Ovary (tissue), 10 donors: ENCODE measurements at regions of chr15 and their contacts with region 1.

Region 1: DNA sequence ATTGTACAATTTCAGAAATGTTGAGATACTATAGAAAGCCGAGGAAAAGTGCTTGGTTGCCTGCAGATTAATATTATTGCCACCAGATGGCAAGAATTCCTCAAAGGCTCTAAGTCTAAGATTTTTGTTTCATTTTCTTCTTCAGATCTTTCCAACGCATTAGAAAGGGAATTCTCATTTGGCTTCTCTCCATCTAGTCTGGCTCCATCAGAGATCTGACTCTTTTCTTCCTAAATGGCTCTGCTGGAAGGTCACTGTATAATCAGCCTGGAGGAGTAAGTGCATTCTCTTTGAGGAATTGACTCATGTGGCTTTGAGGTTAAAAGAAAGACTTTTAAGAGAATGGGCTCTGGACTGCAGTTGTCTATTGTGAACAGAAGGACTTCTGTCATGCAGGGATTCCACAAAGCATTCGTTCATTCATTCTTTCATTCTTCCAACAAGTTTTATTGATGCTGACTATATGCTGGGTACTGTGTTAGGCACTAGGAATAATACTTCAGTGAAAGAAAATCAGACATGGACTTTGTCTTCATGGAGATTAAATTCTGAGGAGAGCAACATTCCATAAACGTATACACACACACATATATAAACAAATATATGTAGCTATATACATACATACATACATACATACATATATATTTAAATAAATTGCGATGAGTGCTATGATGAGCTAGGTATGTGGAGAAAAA is 55.3 kb downstream of the SLC28A2 start:
- DNase-seq: no peak
- H3K4me3 ChIP-seq: no peak overlapping the region
- H3K27ac ChIP-seq: no peak overlapping the region
- H3K4me1 ChIP-seq: peaks cover 3% of the 10 kb centered on the region
- H3K27me3 ChIP-seq: no peaks in the 10 kb centered on the region
- CTCF ChIP-seq: peak; percentile 47 to 79 (median 50)
- EP300 ChIP-seq: no peak
- POLR2A ChIP-seq: no peak

Region 2: DNA sequence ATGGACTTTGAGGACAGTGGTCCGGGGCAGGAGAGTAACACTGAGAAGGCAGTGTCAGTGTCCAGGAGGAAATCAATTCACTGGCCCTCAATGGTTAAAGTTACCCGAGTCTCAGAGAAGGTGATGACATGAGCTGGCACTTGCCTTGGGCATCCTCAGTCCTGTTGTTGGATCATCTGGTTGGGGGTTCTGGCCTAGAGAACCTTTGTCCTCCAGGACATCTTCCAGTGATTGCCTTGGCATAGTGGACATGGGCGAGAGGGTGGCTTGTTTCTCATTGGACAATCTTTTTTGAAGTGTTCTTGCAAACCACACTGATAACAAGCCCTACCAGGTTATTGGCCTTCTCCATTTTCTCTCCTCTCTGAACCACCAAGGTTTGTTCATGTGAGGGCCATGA is 434.3 kb before region 1 on chr15:
- intact Hi-C with region 1: no loop called
- DNase-seq: no peak
- H3K4me3 ChIP-seq: no peak overlapping the region
- H3K27ac ChIP-seq: no peak overlapping the region
- H3K4me1 ChIP-seq: no peaks in the 10 kb centered on the region
- H3K27me3 ChIP-seq: no peaks in the 10 kb centered on the region
- CTCF ChIP-seq: no peak
- EP300 ChIP-seq: no peak
- POLR2A ChIP-seq: no peak

Region 3: DNA sequence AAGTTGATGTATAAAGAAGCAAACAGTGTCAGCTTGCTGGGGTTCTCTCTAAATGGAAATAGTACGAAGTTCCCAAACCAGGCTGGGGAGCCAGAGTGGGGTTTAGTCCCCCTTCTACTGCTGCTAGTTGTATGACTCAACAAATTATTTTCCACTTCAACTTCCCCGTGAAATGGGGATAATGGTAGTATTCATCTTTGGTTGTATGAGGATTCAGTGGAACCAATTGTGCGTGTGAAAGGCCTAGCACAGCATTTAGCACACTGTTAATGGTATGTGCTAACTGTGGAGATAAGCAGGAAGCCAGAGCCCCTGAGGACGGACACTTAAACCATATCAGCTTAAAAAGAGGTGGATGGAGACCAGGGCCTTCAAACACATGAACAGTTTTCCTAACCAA is 280.2 kb before region 1 on chr15:
- intact Hi-C with region 1: no loop called
- DNase-seq: no peak
- H3K4me3 ChIP-seq: no peak overlapping the region
- H3K27ac ChIP-seq: no peak overlapping the region
- H3K4me1 ChIP-seq: peaks cover 4% of the 10 kb centered on the region
- H3K27me3 ChIP-seq: no peaks in the 10 kb centered on the region
- CTCF ChIP-seq: no peak
- EP300 ChIP-seq: no peak
- POLR2A ChIP-seq: no peak

Region 4: DNA sequence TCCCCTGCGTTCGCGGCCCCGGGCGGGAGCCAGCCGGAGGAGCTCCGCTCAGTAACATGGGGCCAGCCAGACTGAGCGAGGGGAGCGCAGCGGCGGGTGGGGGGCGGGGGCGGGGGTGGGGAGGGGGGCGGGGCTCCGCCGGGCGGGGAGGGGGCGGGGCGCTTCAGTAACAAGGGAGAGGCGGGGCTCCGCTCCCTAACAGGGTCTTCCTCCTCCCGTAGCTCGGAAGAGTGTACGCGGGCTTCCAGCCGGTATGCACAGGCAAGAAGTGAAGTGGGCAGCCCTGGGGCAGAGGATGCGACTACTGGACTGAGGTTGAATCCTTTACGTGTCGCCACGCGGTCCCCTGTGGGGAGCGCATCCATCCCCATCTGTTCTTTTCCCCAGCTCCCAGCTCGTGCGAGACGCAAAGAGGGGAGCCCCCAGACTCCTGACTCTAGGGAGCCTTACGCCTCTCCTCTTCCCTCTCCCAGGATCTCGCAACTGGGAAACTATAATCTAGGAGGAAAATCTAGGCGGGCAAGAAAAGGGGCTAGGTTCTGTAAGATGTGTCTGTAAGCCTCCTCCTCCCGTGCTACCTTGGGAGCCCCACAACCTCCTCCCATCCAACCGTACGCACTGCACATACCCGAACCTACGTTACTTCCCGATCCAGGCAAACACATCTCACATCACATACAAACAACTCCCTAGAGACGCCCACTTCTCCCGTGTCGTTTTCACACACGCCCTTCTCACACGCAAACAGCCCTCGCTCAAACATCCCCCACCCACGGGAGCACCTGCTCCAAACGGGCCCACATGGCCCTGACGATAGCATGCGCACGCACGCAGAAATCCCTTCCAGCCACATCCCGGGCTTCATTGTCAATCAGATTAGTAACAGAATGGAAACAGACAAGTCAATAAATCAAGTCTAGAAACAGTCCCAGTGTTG is 119.2 kb before region 1 on chr15 and contains the start of gene SHF:
- intact Hi-C with region 1: loop called in 1 of 4 experiments (anchors 5 kb)
- DNase-seq: peak; percentile 83 to 87 (median 84)
- H3K4me3 ChIP-seq: peak within 1 kb of the TSS; percentile 94
- H3K27ac ChIP-seq: peak within 1 kb of the TSS; percentile 86 to 97
- H3K4me1 ChIP-seq: peaks cover 4% of the 10 kb centered on the region
- H3K27me3 ChIP-seq: no peaks in the 10 kb centered on the region
- CTCF ChIP-seq: no peak
- EP300 ChIP-seq: no peak
- POLR2A ChIP-seq: peak; percentile 48
- total RNA-seq, gene SHF: 18.3 to 45.3 (median 30.5) TPM

Region 5: GRCh38 chr15:45372041-45372995 is 64.9 kb after region 1 on chr15:
- intact Hi-C with region 1: no loop called
- DNase-seq: no peak
- H3K4me3 ChIP-seq: no peak overlapping the region
- H3K27ac ChIP-seq: no peak overlapping the region
- H3K4me1 ChIP-seq: peaks cover 13% of the 10 kb centered on the region
- H3K27me3 ChIP-seq: no peaks in the 10 kb centered on the region
- CTCF ChIP-seq: no peak
- EP300 ChIP-seq: no peak
- POLR2A ChIP-seq: no peak

Region 6: DNA sequence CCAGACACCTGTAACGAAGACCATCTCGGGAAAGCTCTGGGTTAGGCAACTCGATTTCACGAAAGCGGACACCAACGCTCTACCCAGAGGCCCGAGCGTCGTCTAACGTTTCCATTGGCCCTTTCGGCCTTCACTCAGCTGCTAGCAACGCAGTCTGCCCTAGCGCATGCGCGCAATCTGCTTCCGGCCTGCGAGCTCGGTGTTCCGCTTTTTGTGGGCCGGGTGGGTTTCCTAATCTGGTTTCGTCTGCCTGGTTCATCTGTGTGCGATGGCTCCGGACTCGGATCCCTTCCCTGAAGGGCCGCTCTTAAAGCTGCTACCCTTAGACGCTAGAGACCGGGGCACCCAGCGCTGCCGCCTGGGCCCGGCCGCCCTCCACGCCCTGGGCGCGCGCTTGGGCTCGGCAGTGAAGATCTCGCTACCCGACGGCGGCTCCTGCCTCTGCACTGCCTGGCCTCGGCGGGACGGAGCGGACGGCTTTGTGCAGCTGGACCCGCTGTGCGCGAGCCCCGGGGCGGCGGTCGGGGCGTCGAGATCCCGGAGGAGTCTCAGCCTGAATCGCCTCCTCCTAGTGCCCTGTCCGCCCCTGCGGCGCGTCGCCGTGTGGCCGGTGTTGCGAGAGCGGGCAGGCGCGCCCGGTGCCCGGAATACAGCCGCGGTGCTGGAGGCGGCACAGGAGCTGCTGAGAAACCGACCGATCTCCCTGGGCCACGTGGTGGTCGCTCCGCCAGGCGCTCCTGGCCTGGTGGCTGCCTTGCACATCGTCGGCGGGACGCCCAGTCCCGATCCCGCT is 95.0 kb after region 1 on chr15:
- intact Hi-C with region 1: loop called in 3 of 4 experiments (anchors 5 kb)
- DNase-seq: peak; percentile 94 to 98 (median 97)
- H3K4me3 ChIP-seq: peak overlapping the region; percentile 98
- H3K27ac ChIP-seq: peak overlapping the region; percentile 56 to 85
- H3K4me1 ChIP-seq: peaks cover 3% of the 10 kb centered on the region
- H3K27me3 ChIP-seq: no peaks in the 10 kb centered on the region
- CTCF ChIP-seq: no peak
- EP300 ChIP-seq: no peak
- POLR2A ChIP-seq: peak; percentile 65

Region 7: GRCh38 chr15:45759936-45760335 is 452.6 kb after region 1 on chr15:
- intact Hi-C with region 1: no loop called
- DNase-seq: no peak
- H3K4me3 ChIP-seq: no peak overlapping the region
- H3K27ac ChIP-seq: no peak overlapping the region
- H3K4me1 ChIP-seq: no peaks in the 10 kb centered on the region
- H3K27me3 ChIP-seq: no peaks in the 10 kb centered on the region
- CTCF ChIP-seq: no peak
- EP300 ChIP-seq: no peak
- POLR2A ChIP-seq: no peak